Stomach (tissue), 19 donors: ENCODE measurements at regions of chr1 and their contacts with region 1.

Region 1: DNA sequence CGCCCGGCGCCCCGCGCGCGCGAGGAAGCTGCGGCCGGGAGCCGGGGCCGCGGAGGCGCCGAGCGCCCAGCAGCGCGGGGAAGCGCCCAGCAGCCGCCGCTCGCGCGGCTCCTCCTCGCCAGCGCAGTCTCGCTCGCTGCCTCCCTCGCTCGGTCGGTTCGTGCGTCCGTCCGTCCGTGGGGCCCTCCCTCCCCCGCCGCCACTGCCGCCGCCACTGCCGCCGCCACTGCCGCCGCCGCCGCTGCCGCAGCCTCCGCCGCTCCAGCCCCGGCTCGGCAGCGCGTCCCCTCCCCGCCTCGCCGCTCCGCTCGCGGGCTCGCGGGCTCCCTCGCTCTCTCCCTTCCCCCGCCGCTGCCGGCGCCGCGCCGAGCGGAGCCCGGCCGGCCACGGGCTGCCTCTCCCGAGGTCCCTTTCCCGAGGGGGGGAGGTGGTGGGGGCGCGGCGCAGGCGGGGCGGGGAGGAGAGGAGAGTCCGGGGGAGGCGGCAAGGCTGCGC is at the start of gene KCND3:
- DNase-seq: peak; percentile 49 to 74
- H3K4me3 ChIP-seq: peak within 1 kb of the TSS; percentile 64 to 86 (median 71)
- H3K27ac ChIP-seq: peak within 1 kb of the TSS; percentile 53 to 88 (median 76)
- H3K4me1 ChIP-seq: peaks cover 28 to 50% (median 41%) of the 10 kb centered on the region in 4 donors
- H3K27me3 ChIP-seq: peaks cover 0 to 50% (median 11%) of the 10 kb centered on the region in 3 donors
- CTCF ChIP-seq: no peak
- EP300 ChIP-seq: no peak
- POLR2A ChIP-seq: no peak
- total RNA-seq, gene KCND3: 0.87 to 15.8 (median 8.2) TPM

Region 2: DNA sequence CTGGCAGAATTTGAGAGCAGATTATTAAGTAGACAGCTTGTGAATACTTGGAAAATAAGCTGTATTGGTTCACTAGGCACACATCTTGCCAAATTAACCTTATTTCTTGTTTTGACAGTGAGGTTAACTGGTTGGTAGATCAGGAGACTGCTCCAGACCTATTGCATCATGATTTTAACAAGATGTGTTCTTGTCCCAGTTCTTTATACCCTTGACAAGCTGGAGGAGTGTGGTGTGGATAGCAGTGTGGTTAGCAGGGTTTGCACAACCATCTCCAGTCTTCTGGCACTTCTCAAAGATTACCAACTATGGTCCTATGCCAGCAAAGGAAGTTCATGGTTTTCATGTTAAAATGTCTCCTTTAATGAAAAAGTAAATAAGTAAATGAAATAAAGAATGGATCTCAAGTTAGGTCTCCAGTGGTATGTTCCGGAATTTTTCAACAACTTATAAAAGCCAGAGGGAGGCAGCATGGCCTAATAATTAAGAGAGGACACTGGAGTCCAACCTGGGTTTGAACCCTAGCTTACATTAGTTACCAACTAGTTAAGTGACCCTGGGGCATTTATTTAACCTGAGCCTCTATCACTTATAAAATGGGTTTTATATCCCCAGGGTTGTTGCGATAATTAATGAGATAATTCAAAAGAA is 199.8 kb before region 1 on chr1:
- intact Hi-C with region 1: loop called (anchors 10 kb)
- DNase-seq: no peak
- H3K4me3 ChIP-seq: no peak overlapping the region
- H3K27ac ChIP-seq: peak overlapping the region in 2 of 5 donors; percentile 36 to 49
- H3K4me1 ChIP-seq: peaks cover 0 to 10% (median 7%) of the 10 kb centered on the region in 4 donors
- H3K27me3 ChIP-seq: peaks cover 0 to 13% (median 0%) of the 10 kb centered on the region in 3 donors
- CTCF ChIP-seq: peak in 2 of 7 experiments; percentile 11 to 12
- EP300 ChIP-seq: no peak
- POLR2A ChIP-seq: no peak

Region 3: GRCh38 chr1:111909030-111909429 is 80.5 kb before region 1 on chr1:
- intact Hi-C with region 1: no loop called
- DNase-seq: no peak
- H3K4me3 ChIP-seq: no peak overlapping the region
- H3K27ac ChIP-seq: no peak overlapping the region
- H3K4me1 ChIP-seq: peaks cover 0 to 8% (median 4%) of the 10 kb centered on the region in 4 donors
- H3K27me3 ChIP-seq: peaks cover 0 to 5% (median 0%) of the 10 kb centered on the region in 3 donors
- CTCF ChIP-seq: no peak
- EP300 ChIP-seq: no peak
- POLR2A ChIP-seq: no peak

Region 4: GRCh38 chr1:112083487-112083886 is 93.9 kb after region 1 on chr1:
- intact Hi-C with region 1: no loop called
- DNase-seq: peak in 1 of 2 donors; percentile 42
- H3K4me3 ChIP-seq: no peak overlapping the region
- H3K27ac ChIP-seq: no peak overlapping the region
- H3K4me1 ChIP-seq: no peaks in the 10 kb centered on the region
- H3K27me3 ChIP-seq: peaks cover 0 to 13% (median 0%) of the 10 kb centered on the region in 3 donors
- CTCF ChIP-seq: no peak
- EP300 ChIP-seq: no peak
- POLR2A ChIP-seq: no peak

Region 5: GRCh38 chr1:112177314-112177713 is 187.7 kb after region 1 on chr1:
- intact Hi-C with region 1: no loop called
- DNase-seq: no peak
- H3K4me3 ChIP-seq: no peak overlapping the region
- H3K27ac ChIP-seq: no peak overlapping the region
- H3K4me1 ChIP-seq: no peaks in the 10 kb centered on the region
- H3K27me3 ChIP-seq: no peaks in the 10 kb centered on the region
- CTCF ChIP-seq: no peak
- EP300 ChIP-seq: no peak
- POLR2A ChIP-seq: no peak